Transverse colon (tissue), 4 donors: ENCODE measurements at regions of chr4 and their contacts with region 1.

Region 1: GRCh38 chr4:140153718-140154571 is at the start of gene MAML3:
- DNase-seq: peak; percentile 95
- H3K4me3 ChIP-seq: peak within 1 kb of the TSS; percentile 64 to 85 (median 78)
- H3K27ac ChIP-seq: peak within 1 kb of the TSS; percentile 93 to 99 (median 98)
- H3K4me1 ChIP-seq: peaks cover 12 to 45% (median 20%) of the 10 kb centered on the region in 4 donors
- H3K27me3 ChIP-seq: no peaks in the 10 kb centered on the region
- CTCF ChIP-seq: peak in 2 of 5 experiments; percentile 2 to 23
- EP300 ChIP-seq: peak; percentile 42
- POLR2A ChIP-seq: peak; percentile 90
- total RNA-seq, gene MAML3: 16.1 to 40.0 (median 18.1) TPM

Region 2: DNA sequence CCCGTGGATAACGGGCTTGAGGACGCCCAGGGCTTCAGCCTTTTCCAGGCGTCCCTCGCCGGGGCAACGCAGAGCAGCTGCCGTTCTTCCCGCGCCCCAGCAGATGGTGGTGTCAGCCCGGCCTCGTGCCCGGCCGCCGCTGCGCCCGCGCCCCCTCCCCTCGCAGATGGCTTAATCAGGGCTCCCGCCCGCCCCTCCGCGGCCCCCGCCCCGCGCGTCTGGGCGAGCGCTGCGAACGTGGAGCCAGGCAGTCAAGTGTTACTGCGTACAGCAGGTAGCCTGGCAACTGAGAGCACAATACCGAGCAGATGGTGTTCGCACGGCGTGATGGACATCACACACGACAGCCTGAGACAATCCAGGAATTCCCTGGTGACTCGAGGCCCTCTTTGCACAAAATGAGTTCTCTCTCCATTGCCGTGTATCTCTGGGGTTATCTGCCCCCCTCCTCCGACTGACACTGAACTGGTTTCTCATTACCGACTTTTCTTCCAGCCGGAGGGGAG is 419.0 kb before region 1 on chr4:
- in situ Hi-C with region 1: loop called in 1 of 4 experiments (anchors 10 kb)
- intact Hi-C with region 1: loop called (anchors 2 kb)
- DNase-seq: peak; percentile 74
- H3K4me3 ChIP-seq: peak overlapping the region; percentile 21 to 54 (median 30)
- H3K27ac ChIP-seq: peak overlapping the region; percentile 70 to 89 (median 78)
- H3K4me1 ChIP-seq: peaks cover 0 to 19% (median 11%) of the 10 kb centered on the region in 4 donors
- H3K27me3 ChIP-seq: no peaks in the 10 kb centered on the region
- CTCF ChIP-seq: peak in 4 of 5 experiments; percentile 65 to 73 (median 72)
- EP300 ChIP-seq: no peak
- POLR2A ChIP-seq: no peak

Region 3: DNA sequence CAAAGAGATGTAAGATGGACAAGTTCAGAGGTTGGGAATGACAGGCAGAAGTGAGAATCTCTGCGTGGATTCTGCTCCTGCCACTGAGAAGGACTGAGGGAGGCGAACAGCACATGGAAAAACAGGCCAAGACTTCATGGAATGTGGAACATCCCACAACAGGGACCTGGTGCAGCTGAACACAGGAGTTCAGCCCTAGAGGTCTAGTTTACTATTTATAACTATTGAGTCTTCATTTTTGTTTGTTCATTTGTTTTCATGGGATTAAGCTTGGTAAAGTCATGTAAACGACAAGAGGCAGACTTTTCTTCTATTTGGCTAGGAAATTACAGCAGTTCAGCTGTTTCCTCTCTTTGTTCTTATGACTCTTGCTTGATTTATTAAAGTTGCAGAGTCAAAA is 234.4 kb before region 1 on chr4:
- in situ Hi-C with region 1: no loop called
- intact Hi-C with region 1: loop called (anchors 10 kb)
- DNase-seq: no peak
- H3K4me3 ChIP-seq: no peak overlapping the region
- H3K27ac ChIP-seq: peak overlapping the region; percentile 43 to 79 (median 76)
- H3K4me1 ChIP-seq: peaks cover 14 to 55% (median 45%) of the 10 kb centered on the region in 4 donors
- H3K27me3 ChIP-seq: no peaks in the 10 kb centered on the region
- CTCF ChIP-seq: no peak
- EP300 ChIP-seq: no peak
- POLR2A ChIP-seq: no peak

Region 4: DNA sequence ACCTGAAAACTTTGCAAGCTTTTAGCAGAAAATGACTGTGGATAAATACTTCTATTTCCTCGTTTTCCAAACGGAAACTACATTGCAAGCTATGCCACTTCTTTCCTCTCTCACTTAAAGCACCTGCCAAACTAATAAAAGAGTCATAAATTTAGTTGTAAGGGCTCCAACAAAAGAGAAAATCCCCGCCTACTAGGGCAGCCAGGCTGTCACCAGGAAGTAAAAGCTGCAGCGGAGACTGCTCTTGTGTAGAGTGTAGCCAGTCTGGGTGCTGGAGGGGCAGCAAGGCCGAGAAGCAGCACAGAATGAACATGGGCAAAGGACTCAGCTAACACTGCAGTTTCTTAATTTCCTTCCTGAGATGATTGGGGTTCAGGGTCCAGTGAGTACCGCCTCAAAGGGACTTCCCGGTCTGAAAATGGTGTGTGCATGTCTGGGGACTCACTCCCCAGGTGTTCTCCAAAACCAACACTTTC is 89.4 kb after region 1 on chr4:
- in situ Hi-C with region 1: loop called in 2 of 4 experiments (anchors 5 kb)
- intact Hi-C with region 1: no loop called
- DNase-seq: peak; percentile 73
- H3K4me3 ChIP-seq: peak overlapping the region in 2 of 4 donors; percentile 16 to 28
- H3K27ac ChIP-seq: peak overlapping the region; percentile 82 to 87 (median 85)
- H3K4me1 ChIP-seq: peaks cover 15 to 43% (median 30%) of the 10 kb centered on the region in 4 donors
- H3K27me3 ChIP-seq: no peaks in the 10 kb centered on the region
- CTCF ChIP-seq: no peak
- EP300 ChIP-seq: no peak
- POLR2A ChIP-seq: peak; percentile 82